Naive thymus-derived CD8-positive, alpha-beta T cell (primary cell): ENCODE measurements at regions of chr15 and their contacts with region 1.

Region 1: GRCh38 chr15:92917606-92918407 is 17.7 kb downstream of the CHD2 start:
- DNase-seq: peak; percentile 75 to 95 (median 90)
- ATAC-seq: peak; percentile 16 to 33
- H3K4me3 Mint-ChIP-seq: peak overlapping the region; percentile 26 to 92 (median 66)
- H3K27ac Mint-ChIP-seq: peak overlapping the region; percentile 90 to 100 (median 98)
- H3K4me1 Mint-ChIP-seq: peaks cover 43 to 93% (median 83%) of the 10 kb centered on the region in 4 donors
- H3K27me3 Mint-ChIP-seq: no peaks in the 10 kb centered on the region

Region 2: GRCh38 chr15:92636908-92637481 is 280.8 kb before region 1 on chr15:
- POLR2A ChIA-PET with region 1: no interaction called
- DNase-seq: no peak
- ATAC-seq: no peak
- H3K4me3 Mint-ChIP-seq: peak overlapping the region in 1 of 10 donors; percentile 2
- H3K27ac Mint-ChIP-seq: no peak overlapping the region
- H3K4me1 Mint-ChIP-seq: peaks cover 0 to 10% (median 4%) of the 10 kb centered on the region in 4 donors
- H3K27me3 Mint-ChIP-seq: peaks cover 0 to 10% (median 4%) of the 10 kb centered on the region in 5 donors

Region 3: GRCh38 chr15:92797168-92797951 is 120.4 kb before region 1 on chr15:
- POLR2A ChIA-PET with region 1: interaction called, 17 read pairs
- DNase-seq: peak in 7 of 10 donors; percentile 12 to 82 (median 67)
- ATAC-seq: peak; percentile 89 to 91
- H3K4me3 Mint-ChIP-seq: peak overlapping the region in 1 of 10 donors; percentile 22
- H3K27ac Mint-ChIP-seq: peak overlapping the region; percentile 25 to 90 (median 76)
- H3K4me1 Mint-ChIP-seq: peaks cover 4 to 8% (median 7%) of the 10 kb centered on the region in 4 donors
- H3K27me3 Mint-ChIP-seq: no peaks in the 10 kb centered on the region

Region 4: DNA sequence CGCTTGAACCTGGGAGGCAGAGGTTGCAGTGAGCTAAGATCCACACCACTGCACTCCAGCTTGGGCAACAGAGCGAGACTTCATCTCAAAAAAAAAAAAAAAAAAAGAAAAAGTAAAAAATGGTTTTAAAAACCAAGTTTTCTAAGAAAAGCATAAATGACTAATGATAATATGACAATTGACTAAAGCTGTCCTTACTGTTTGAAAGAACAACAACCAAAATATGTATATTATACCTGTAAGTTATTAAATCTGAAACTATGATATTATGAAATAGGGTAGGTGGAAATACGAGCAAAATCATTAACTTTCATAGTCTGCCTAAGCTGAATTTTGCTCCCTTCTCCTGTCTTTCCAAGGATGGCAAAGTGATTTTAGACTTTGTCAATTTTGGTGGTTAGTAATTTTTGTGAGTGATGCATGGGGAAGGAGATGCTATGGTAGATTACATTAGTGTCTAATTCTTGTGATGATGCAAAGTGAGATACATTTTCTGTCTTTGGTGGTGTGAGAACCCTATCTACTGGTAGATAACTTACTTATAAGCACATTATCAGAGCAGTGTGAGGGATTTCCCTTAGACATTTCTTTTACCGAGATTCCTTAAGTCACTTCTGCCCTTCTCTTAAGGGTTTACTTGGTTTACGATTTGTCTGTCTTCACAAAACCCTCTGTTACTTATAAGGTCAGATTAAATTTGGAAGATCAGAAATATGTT is 28.3 kb before region 1 on chr15:
- POLR2A ChIA-PET with region 1: interaction called, 183 read pairs
- DNase-seq: peak in 3 of 10 donors; percentile 12 to 28 (median 14)
- ATAC-seq: peak; percentile 13 to 21
- H3K4me3 Mint-ChIP-seq: peak overlapping the region; percentile 36 to 96 (median 76)
- H3K27ac Mint-ChIP-seq: peak overlapping the region; percentile 65 to 92 (median 84)
- H3K4me1 Mint-ChIP-seq: peaks cover 30 to 85% (median 61%) of the 10 kb centered on the region in 4 donors
- H3K27me3 Mint-ChIP-seq: no peaks in the 10 kb centered on the region